Panc1 (cell line): ENCODE measurements at regions of chr16 and their contacts with region 1.

Region 1: GRCh38 chr16:11396241-11397048 is 51.2 kb downstream of the RMI2 start:
- DNase-seq: no peak
- ATAC-seq: peak; percentile 89
- H3K4me3 ChIP-seq: no peak overlapping the region
- H3K27ac ChIP-seq: no peak overlapping the region
- H3K4me1 ChIP-seq: no peaks in the 10 kb centered on the region
- H3K27me3 ChIP-seq: no peaks in the 10 kb centered on the region
- CTCF ChIP-seq: peak; percentile 99

Region 2: DNA sequence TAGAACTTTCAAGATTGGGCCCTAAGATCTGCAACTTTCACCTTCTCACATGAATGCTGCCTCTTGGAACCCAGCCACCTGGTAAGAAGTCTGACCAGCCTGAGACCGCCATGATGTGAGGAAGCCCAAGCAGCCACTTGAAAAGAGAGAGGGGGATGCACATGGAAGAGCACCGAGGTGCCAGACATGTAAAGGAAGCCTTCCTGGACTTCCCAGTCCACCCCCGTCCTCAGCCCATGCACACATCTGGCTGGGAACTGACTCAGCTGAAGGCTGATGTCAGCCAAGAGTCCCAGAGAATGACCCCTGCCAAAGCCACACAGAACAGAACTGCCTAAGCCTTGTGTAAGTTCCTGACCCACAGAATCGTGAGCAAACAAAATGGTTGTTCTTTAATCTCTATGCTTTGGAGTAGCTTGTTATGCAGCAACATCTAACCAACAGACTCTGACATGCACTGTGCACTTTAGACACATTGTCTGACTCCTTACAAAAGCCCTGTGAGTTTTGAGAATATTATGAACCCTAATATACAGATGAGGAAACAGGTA is 35.5 kb after region 1 on chr16:
- CTCF ChIA-PET with region 1: no interaction called
- POLR2A ChIA-PET with region 1: no interaction called
- in situ Hi-C with region 1: no loop called
- intact Hi-C with region 1: no loop called
- DNase-seq: no peak
- ATAC-seq: no peak
- H3K4me3 ChIP-seq: no peak overlapping the region
- H3K27ac ChIP-seq: no peak overlapping the region
- H3K4me1 ChIP-seq: no peaks in the 10 kb centered on the region
- H3K27me3 ChIP-seq: no peaks in the 10 kb centered on the region
- CTCF ChIP-seq: no peak

Region 3: GRCh38 chr16:11715246-11715947 is 319.0 kb after region 1 on chr16:
- CTCF ChIA-PET with region 1: interaction called, 4 read pairs
- POLR2A ChIA-PET with region 1: interaction called, 3 read pairs
- in situ Hi-C with region 1: no loop called
- intact Hi-C with region 1: loop called (anchors 2 kb)
- DNase-seq: no peak
- ATAC-seq: no peak
- H3K4me3 ChIP-seq: no peak overlapping the region
- H3K27ac ChIP-seq: no peak overlapping the region
- H3K4me1 ChIP-seq: no peaks in the 10 kb centered on the region
- H3K27me3 ChIP-seq: no peaks in the 10 kb centered on the region
- CTCF ChIP-seq: no peak

Region 4: GRCh38 chr16:12781777-12782176 is 1385.3 kb after region 1 on chr16:
- CTCF ChIA-PET with region 1: no interaction called
- POLR2A ChIA-PET with region 1: no interaction called
- in situ Hi-C with region 1: no loop called
- intact Hi-C with region 1: no loop called
- DNase-seq: no peak
- ATAC-seq: no peak
- H3K4me3 ChIP-seq: no peak overlapping the region
- H3K27ac ChIP-seq: no peak overlapping the region
- H3K4me1 ChIP-seq: no peaks in the 10 kb centered on the region
- H3K27me3 ChIP-seq: no peaks in the 10 kb centered on the region
- CTCF ChIP-seq: no peak